Cardiac septum (tissue), 1 donor: ENCODE measurements at regions of chr14 and their contacts with region 1.

Region 1: GRCh38 chr14:76918751-76919543 is 92.7 kb downstream of the LRRC74A start:
- DNase-seq: peak; percentile 95

Region 2: GRCh38 chr14:76947078-76947837 is 28.3 kb after region 1 on chr14:
- intact Hi-C with region 1: loop called (anchors 2 kb)
- DNase-seq: peak; percentile 93

Region 3: GRCh38 chr14:76956316-76957090 is 37.6 kb after region 1 on chr14:
- intact Hi-C with region 1: loop called (anchors 2 kb)
- DNase-seq: peak; percentile 97

Region 4: GRCh38 chr14:77028384-77029231 is 109.7 kb after region 1 on chr14 and contains the start of gene IRF2BPL:
- intact Hi-C with region 1: loop called (anchors 1 kb)
- DNase-seq: peak; percentile 99
- total RNA-seq, gene IRF2BPL: 46.0 TPM

Region 5: GRCh38 chr14:77040059-77040740 is 121.3 kb after region 1 on chr14:
- intact Hi-C with region 1: loop called (anchors 1 kb)
- DNase-seq: peak; percentile 99